T-cell (primary cell): ENCODE measurements at regions of chr1 and their contacts with region 1.

Region 1: DNA sequence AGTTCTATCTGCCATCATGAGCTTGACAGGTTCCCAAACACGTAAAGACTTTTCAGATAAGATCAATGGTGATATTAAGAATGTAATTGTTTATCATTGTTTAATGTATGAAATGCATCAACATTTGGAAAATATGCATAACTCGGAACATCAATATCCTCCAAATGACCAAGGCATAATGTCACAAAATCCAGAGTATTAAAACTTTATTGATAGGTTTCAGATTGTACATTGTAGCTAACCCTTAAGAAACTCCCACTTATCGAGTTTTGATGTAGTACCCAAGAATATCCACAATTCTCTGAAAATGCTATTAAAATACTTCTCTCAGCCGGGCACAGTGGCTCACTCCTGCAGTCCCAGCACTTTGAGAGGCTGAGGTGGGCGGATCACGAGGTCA is 12.1 kb upstream of the TNNI1 start:
- DNase-seq: no peak
- ATAC-seq: no peak
- H3K4me3 ChIP-seq: no peak overlapping the region
- H3K4me3 Mint-ChIP-seq: no peak overlapping the region
- H3K27ac ChIP-seq: no peak overlapping the region
- H3K27ac Mint-ChIP-seq: no peak overlapping the region
- H3K4me1 ChIP-seq: peaks cover 0 to 7% of the 10 kb centered on the region in 2 experiments
- H3K4me1 Mint-ChIP-seq: peaks cover 4 to 10% (median 6%) of the 10 kb centered on the region in 3 donors
- H3K27me3 ChIP-seq: peaks cover 0 to 25% of the 10 kb centered on the region in 2 experiments
- H3K27me3 Mint-ChIP-seq: peaks cover 9 to 33% of the 10 kb centered on the region in 2 donors

Region 2: GRCh38 chr1:201447911-201448871 is 14.6 kb after region 1 on chr1:
- CTCF ChIA-PET with region 1: interaction called, 3 to 11 read pairs
- POLR2A ChIA-PET with region 1: no interaction called
- DNase-seq: peak in 33 of 35 experiments; percentile 14 to 74 (median 43)
- ATAC-seq: peak; percentile 82 to 93 (median 86)
- H3K4me3 ChIP-seq: no peak overlapping the region
- H3K4me3 Mint-ChIP-seq: no peak overlapping the region
- H3K27ac ChIP-seq: no peak overlapping the region
- H3K27ac Mint-ChIP-seq: no peak overlapping the region
- H3K4me1 ChIP-seq: peaks cover 0 to 9% of the 10 kb centered on the region in 2 experiments
- H3K4me1 Mint-ChIP-seq: peaks cover 0 to 5% (median 3%) of the 10 kb centered on the region in 3 donors
- H3K27me3 ChIP-seq: peaks cover 0 to 26% of the 10 kb centered on the region in 2 experiments
- H3K27me3 Mint-ChIP-seq: peaks cover 16 to 17% of the 10 kb centered on the region in 2 donors